Dorsolateral prefrontal cortex (tissue), 120 donors: ENCODE measurements at regions of chr10 and their contacts with region 1.

Region 1: DNA sequence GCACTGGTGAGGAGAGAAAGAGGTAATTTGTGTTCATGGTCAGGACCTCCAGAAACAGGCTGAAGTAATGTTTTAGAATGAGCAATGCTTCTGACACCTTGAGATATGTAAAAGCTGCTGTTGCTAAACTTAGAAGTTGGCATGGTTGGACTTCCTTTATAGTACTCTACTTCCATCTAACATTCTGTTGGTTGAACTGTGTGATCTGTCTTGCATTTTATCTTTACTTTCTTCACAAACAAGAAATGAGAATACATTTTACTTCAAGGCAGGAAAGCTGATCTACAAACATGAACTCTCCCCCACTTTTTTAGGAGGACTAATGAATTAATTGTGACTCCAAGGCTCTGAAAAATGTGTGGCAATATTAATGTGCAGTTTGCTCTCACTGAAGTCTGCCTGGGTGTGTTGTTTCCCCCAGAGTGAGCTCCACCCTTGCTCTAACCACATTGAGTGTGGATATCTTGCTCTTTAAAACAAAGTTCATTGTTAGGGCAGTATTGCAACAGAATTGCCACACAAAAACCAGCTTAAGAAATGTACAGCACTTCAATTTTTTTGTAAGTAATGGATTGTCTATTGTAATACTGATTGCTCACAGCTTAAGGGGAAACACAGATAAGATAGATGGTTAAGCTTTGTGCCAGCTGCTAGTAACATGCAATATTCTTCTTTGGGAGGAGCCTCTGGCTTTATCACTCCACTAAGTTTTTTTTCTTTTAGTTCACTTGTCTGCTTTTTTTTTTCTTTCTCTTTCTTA is 69.0 kb downstream of the ADD3 start:
- DNase-seq: no peak
- H3K4me3 ChIP-seq: peak overlapping the region in 49 of 59 donors; percentile 0 to 60 (median 28)
- H3K27ac ChIP-seq: peak overlapping the region; percentile 58 to 98 (median 92)
- H3K27me3 ChIP-seq: no peaks in the 10 kb centered on the region
- CTCF ChIP-seq: peak in 1 of 56 donors; percentile 7

Region 2: GRCh38 chr10:109866168-109866994 is 210.4 kb before region 1 on chr10:
- intact Hi-C with region 1: no loop called
- DNase-seq: peak in 2 of 10 donors; percentile 19 to 31
- H3K4me3 ChIP-seq: no peak overlapping the region
- H3K27ac ChIP-seq: peak overlapping the region in 8 of 59 donors; percentile 3 to 61 (median 36)
- H3K27me3 ChIP-seq: no peaks in the 10 kb centered on the region
- CTCF ChIP-seq: peak in 51 of 56 donors; percentile 20 to 65 (median 48)

Region 3: DNA sequence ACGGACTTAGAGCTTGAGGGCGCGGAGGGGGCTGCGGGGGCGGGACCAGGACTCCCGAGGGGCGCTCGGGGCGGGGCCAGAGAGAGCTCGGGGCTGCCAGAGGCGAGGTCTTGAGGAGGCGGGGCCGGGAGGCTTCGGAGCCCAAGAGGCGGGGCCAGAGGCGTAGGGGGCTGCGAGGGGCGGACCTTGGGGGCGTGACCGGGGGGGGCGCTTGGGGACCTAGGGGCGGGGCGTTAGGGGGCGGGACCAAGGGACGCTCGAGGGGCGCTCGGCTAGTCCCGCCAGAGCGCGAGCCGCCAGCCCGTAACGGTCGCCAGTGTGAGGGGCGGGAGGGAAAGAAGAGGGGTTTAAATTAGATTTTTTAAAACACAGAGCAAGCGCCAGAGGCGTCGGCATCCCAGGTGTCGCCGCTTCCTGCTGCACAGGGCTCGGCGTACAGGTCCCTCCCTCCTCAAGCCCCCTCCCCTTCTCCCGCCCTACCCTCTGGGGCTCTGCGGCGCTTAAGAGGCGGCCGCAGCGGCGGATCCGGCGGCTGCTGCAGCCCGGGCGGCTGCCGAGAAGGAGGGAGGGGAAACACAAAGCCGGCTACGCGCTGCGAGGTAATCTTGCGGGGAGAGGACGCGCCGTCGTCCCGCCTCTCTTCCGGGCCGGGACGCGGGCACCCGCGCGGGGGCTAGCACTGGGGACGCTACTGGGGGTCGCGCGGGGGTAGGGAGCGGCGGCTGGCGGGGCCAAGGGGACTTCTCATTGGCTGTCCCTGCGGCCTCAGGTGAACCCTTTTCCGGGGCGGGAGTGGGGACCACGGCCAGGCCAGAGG is 68.8 kb before region 1 on chr10 and contains the start of gene ADD3:
- intact Hi-C with region 1: loop called (anchors 2 to 5 kb)
- DNase-seq: peak; percentile 90 to 98 (median 94)
- H3K4me3 ChIP-seq: peak within 1 kb of the TSS; percentile 73 to 99 (median 94)
- H3K27ac ChIP-seq: peak within 1 kb of the TSS; percentile 84 to 99 (median 97)
- H3K27me3 ChIP-seq: no peaks in the 10 kb centered on the region
- CTCF ChIP-seq: peak in 8 of 56 donors; percentile 3 to 23 (median 12)
- total RNA-seq, gene ADD3: 171 to 457 (median 267) TPM

Region 4: GRCh38 chr10:110556969-110557601 is 480.3 kb after region 1 on chr10:
- intact Hi-C with region 1: loop called in 1 of 2 experiments (anchors 5 kb)
- DNase-seq: peak in 2 of 10 donors; percentile 22 to 46
- H3K4me3 ChIP-seq: no peak overlapping the region
- H3K27ac ChIP-seq: no peak overlapping the region
- H3K27me3 ChIP-seq: peaks cover 0 to 5% (median 0%) of the 10 kb centered on the region in 45 donors
- CTCF ChIP-seq: peak in 55 of 56 donors; percentile 22 to 72 (median 57)